Posterior vena cava (tissue), 2 donors: ENCODE measurements at regions of chr13 and their contacts with region 1.

Region 1: DNA sequence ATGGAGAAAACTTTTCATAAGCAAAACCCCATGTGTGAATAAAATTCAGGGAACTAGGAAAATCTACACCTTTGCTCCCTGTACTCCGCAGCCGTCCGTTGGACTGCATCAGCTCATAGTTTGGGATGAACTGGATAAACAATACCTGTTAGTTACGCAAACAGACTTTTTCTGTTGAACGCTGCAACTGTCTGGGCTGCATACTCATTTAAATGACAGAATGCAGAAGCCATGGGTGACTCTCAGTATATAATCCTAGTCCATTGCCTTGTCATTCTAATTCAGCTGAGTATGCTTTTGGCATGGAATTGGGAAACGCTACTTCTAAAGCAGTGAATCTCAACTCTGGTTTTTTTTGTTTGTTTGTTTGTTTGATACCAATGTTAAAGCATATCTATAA is 151.6 kb downstream of the SLITRK1 start:
- DNase-seq: no peak

Region 2: GRCh38 chr13:82758044-82758443 is 972.6 kb before region 1 on chr13:
- intact Hi-C with region 1: loop called in 1 of 2 experiments (anchors 10 kb)
- DNase-seq: no peak

Region 3: GRCh38 chr13:83765796-83766195 is 35.1 kb after region 1 on chr13:
- intact Hi-C with region 1: no loop called
- DNase-seq: no peak